Esophagus squamous epithelium (tissue), 5 donors: ENCODE measurements at regions of chr5 and their contacts with region 1.

Region 1: DNA sequence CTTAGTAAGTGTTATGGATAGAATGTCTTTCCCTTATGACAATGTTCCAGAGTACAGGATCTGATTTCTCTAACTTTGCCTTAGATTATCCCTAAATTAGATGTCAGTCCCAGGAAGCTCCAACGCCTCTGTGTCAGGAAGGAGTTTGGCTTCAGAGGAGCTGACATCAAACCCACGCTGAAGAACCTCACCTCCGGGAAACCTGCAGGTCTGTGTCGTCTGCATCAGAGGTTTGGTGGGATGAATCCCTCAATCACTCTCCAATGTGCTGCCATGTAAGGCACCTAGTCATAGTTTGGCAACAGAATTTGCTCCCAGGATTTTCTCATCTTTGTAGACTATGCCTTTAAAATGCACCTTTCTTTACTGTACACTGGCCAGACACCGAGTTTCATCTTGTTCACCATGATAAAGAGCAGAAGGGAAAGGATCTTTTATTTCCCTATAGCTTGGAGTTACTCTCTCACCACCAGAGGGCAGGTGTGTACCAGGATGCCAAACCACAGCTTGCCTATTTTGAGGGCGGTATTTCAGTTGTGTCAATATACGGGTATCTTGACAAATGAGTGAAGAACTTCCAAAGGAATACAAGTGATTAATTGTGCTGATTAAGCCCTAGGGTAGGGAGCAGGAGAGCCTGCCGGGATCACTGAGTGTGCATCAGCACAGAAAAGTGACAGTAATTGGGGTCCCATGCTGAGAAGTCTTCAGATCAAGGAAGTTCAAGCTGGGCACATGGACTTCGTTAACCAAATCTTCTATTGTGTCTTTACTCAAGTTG is 23.4 kb downstream of the MINAR2 start:
- DNase-seq: no peak
- H3K4me3 ChIP-seq: no peak overlapping the region
- H3K27ac ChIP-seq: no peak overlapping the region
- H3K4me1 ChIP-seq: no peaks in the 10 kb centered on the region
- H3K27me3 ChIP-seq: peaks cover 0 to 4% (median 0%) of the 10 kb centered on the region in 4 donors
- CTCF ChIP-seq: peak; percentile 35 to 78 (median 66)
- POLR2A ChIP-seq: no peak

Region 2: DNA sequence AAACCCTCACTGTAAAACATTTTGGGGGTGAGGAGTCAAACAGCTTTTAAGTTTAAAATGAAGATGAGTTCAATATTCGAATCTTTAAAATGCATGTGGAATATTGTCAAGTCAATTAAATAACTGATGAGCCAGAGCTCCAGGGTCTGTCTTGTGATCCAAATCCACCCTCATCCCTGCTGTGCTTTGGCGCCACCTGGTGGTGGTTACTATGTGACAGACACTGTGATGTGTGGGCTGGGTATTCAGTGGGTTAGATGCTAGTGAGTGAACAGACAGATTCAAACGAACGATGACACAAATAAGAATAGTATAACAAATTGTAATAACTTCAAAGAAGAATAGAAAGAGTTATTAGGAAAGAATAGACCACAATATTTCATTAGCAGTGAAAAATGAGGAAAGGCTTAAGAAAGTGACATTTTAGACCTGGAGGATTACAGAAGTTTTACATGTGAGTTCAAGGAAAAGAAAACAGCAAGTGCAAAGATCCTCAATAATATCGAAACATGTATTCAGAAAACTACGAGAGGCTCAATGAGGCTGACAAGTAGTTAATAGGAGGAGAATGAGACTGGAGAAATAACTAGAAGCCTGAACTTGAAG is 81.6 kb after region 1 on chr5:
- intact Hi-C with region 1: loop called (anchors 10 kb)
- DNase-seq: peak; percentile 0
- H3K4me3 ChIP-seq: no peak overlapping the region
- H3K27ac ChIP-seq: no peak overlapping the region
- H3K4me1 ChIP-seq: no peaks in the 10 kb centered on the region
- H3K27me3 ChIP-seq: no peaks in the 10 kb centered on the region
- CTCF ChIP-seq: peak; percentile 51 to 88 (median 74)
- POLR2A ChIP-seq: no peak